Activated T-helper 1 cell treated with anti-CD3 and anti-CD28 coated beads, Interleukin-12 subunit alpha, Interleukin-12 subunit beta, Interleukin-2, Interleukin-4 antibody, amounts not matched to agents 30 ng/mL and 10 ng/mL and 1 ng/mL, durations not matched to agents 14 hours and 24 hours and 36 hours (primary cell): ENCODE measurements at regions of chr16 and their contacts with region 1.

Region 1: GRCh38 chr16:1610276-1611017 is 1.4 kb downstream of the IFT140 start:
- DNase-seq: peak; percentile 90
- H3K4me3 Mint-ChIP-seq: peak overlapping the region; percentile 91
- H3K27ac Mint-ChIP-seq: peak overlapping the region; percentile 100
- H3K4me1 Mint-ChIP-seq: peaks cover 30% of the 10 kb centered on the region
- H3K27me3 Mint-ChIP-seq: no peaks in the 10 kb centered on the region

Region 2: DNA sequence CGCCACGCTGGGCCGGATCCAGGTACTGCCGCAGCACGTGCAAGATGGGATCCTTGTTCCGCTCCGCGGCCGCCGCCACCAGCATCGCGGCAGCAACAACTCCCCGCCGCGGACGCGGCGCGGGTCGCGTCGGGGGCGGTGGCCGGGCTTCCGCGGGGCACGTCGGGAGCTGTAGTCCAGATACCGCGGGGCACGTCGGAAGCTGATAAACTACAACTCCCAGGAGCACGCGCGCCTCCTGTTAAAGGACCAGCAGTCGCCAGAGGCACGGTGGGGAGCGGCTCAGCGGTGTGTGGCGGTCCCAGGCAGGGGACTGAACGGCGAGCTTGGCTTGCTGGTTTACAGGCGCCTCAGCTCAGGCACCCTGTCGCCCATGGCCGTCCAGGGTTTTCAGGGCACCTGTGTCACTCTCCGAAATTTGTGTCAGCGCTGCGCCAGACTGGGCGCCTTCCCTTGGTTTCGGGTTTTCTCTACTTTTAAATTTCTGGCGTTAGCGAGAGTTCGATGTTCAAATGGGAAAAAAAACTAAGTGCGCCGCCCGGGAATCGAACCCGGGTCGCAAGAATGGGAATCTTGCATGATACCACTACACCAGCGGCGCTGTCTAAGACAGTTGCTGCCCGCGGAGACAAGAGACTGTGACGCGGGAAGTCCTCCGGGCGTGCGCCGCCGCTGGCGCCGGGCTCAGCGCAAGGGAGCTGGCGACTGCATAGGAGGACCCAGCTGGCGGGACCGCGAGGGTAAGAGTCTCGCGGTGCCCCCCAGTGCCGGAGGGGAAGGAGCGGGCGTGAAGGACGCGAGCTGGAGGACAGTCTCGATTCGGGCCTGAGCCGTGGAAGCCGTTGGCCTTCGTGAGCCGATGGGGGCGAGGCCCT is 974.0 kb before region 1 on chr16 and contains the start of gene METTL26:
- intact Hi-C with region 1: loop called (anchors 2 kb)
- DNase-seq: peak; percentile 91
- H3K4me3 Mint-ChIP-seq: peak within 1 kb of the TSS; percentile 85
- H3K27ac Mint-ChIP-seq: peak within 1 kb of the TSS; percentile 91
- H3K4me1 Mint-ChIP-seq: peaks cover 6% of the 10 kb centered on the region
- H3K27me3 Mint-ChIP-seq: no peaks in the 10 kb centered on the region
- total RNA-seq, gene METTL26: 141 and 147 TPM in 2 replicates

Region 3: DNA sequence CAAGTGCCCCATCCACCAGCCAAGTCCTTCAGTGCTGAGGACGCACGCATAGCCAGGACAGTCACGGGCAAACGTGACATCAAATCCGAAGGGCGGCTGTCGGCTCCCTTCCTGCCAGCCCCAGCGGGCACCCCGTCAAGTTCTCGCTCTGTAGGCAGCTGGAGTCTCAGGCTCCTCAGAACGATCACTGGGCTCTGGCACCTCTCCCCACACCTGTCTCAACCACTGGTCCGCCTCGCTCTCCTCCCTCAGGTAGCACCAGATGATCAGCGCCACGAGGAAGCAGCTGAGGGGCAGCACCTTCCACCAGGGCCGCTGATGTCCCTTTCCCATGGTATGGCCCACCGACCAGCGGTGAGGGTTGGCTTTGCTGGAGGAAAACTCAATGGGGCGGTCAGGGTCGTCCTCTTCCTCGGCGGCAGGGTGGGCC is 190.3 kb before region 1 on chr16:
- intact Hi-C with region 1: loop called (anchors 2 kb)
- DNase-seq: no peak
- H3K4me3 Mint-ChIP-seq: peak overlapping the region; percentile 91
- H3K27ac Mint-ChIP-seq: peak overlapping the region; percentile 100
- H3K4me1 Mint-ChIP-seq: peaks cover 5% of the 10 kb centered on the region
- H3K27me3 Mint-ChIP-seq: peaks cover 3% of the 10 kb centered on the region

Region 4: GRCh38 chr16:1533443-1533951 is 77.0 kb before region 1 on chr16 and contains the start of gene TMEM204:
- intact Hi-C with region 1: loop called (anchors 2 kb)
- DNase-seq: peak; percentile 47
- H3K4me3 Mint-ChIP-seq: peak within 1 kb of the TSS; percentile 98
- H3K27ac Mint-ChIP-seq: peak within 1 kb of the TSS; percentile 92
- H3K4me1 Mint-ChIP-seq: peaks cover 44% of the 10 kb centered on the region
- H3K27me3 Mint-ChIP-seq: peaks cover 2% of the 10 kb centered on the region
- total RNA-seq, gene TMEM204: 22.8 and 23.7 TPM in 2 replicates

Region 5: GRCh38 chr16:1677802-1678496 is 67.5 kb after region 1 on chr16 and contains the start of gene JPT2:
- intact Hi-C with region 1: loop called (anchors 1 kb)
- DNase-seq: peak; percentile 96
- H3K4me3 Mint-ChIP-seq: peak within 1 kb of the TSS; percentile 92
- H3K27ac Mint-ChIP-seq: peak within 1 kb of the TSS; percentile 91
- H3K4me1 Mint-ChIP-seq: peaks cover 32% of the 10 kb centered on the region
- H3K27me3 Mint-ChIP-seq: no peaks in the 10 kb centered on the region
- total RNA-seq, gene JPT2: 106 and 119 TPM in 2 replicates

Region 6: GRCh38 chr16:1826691-1827575 is 216.5 kb after region 1 on chr16 and contains the starts of genes FAHD1 and HAGH:
- intact Hi-C with region 1: loop called (anchors 1 kb)
- DNase-seq: peak; percentile 91
- H3K4me3 Mint-ChIP-seq: peak within 1 kb of the TSS; percentile 92
- H3K27ac Mint-ChIP-seq: peak within 1 kb of the TSS; percentile 85
- H3K4me1 Mint-ChIP-seq: peaks cover 26% of the 10 kb centered on the region
- H3K27me3 Mint-ChIP-seq: no peaks in the 10 kb centered on the region
- total RNA-seq, gene FAHD1: 19.4 and 20.2 TPM in 2 replicates
- total RNA-seq, gene HAGH: 57.8 and 58.7 TPM in 2 replicates

Region 7: GRCh38 chr16:2531767-2532493 is 921.5 kb after region 1 on chr16:
- intact Hi-C with region 1: loop called (anchors 2 kb)
- DNase-seq: peak; percentile 97
- H3K4me3 Mint-ChIP-seq: peak overlapping the region; percentile 100
- H3K27ac Mint-ChIP-seq: peak overlapping the region; percentile 100
- H3K4me1 Mint-ChIP-seq: peaks cover 9% of the 10 kb centered on the region
- H3K27me3 Mint-ChIP-seq: no peaks in the 10 kb centered on the region